Prostate gland (tissue), 2 donors: ENCODE measurements at regions of chr3 and their contacts with region 1.

Region 1: GRCh38 chr3:113838631-113839209 is at the start of gene GRAMD1C:
- DNase-seq: peak; percentile 84
- H3K4me3 ChIP-seq: peak within 1 kb of the TSS; percentile 31 to 40
- H3K27ac ChIP-seq: peak within 1 kb of the TSS; percentile 5 to 51
- H3K4me1 ChIP-seq: no peaks in the 10 kb centered on the region
- H3K27me3 ChIP-seq: no peaks in the 10 kb centered on the region
- CTCF ChIP-seq: peak; percentile 73 to 95 (median 83)
- POLR2A ChIP-seq: peak; percentile 14
- total RNA-seq, gene GRAMD1C: 7.4 to 21.4 TPM

Region 2: GRCh38 chr3:113736548-113737089 is 102.1 kb before region 1 on chr3:
- intact Hi-C with region 1: loop called (anchors 10 kb)
- DNase-seq: peak; percentile 4
- H3K4me3 ChIP-seq: no peak overlapping the region
- H3K27ac ChIP-seq: no peak overlapping the region
- H3K4me1 ChIP-seq: peaks cover 3% of the 10 kb centered on the region
- H3K27me3 ChIP-seq: no peaks in the 10 kb centered on the region
- CTCF ChIP-seq: peak; percentile 17 to 80 (median 70)
- POLR2A ChIP-seq: no peak

Region 3: GRCh38 chr3:113912552-113913236 is 74.0 kb after region 1 on chr3:
- intact Hi-C with region 1: loop called (anchors 5 kb)
- DNase-seq: peak; percentile 64
- H3K4me3 ChIP-seq: no peak overlapping the region
- H3K27ac ChIP-seq: peak overlapping the region in 1 of 2 donors; percentile 29
- H3K4me1 ChIP-seq: no peaks in the 10 kb centered on the region
- H3K27me3 ChIP-seq: no peaks in the 10 kb centered on the region
- CTCF ChIP-seq: peak in 3 of 4 experiments; percentile 71 to 82 (median 76)
- POLR2A ChIP-seq: no peak